Left cardiac atrium (tissue), 4 donors: ENCODE measurements at regions of chr16 and their contacts with region 1.

Region 1: GRCh38 chr16:31873556-31874365 is at the start of gene ZNF267:
- DNase-seq: peak; percentile 97
- ATAC-seq: peak; percentile 95 to 99
- total RNA-seq, gene ZNF267: 8.4 to 8.5 TPM

Region 2: GRCh38 chr16:31713071-31713944 is 160.5 kb before region 1 on chr16:
- intact Hi-C with region 1: loop called in 1 of 2 experiments (anchors 10 kb)
- DNase-seq: peak; percentile 96
- ATAC-seq: peak; percentile 96 to 97